Activated naive CD4-positive, alpha-beta T cell treated with anti-CD3 and anti-CD28 coated beads, Interleukin-2, amount 10 ng/mL, durations not matched to agents 7 days and 5 days (primary cell): ENCODE measurements at regions of chr10 and their contacts with region 1.

Region 1: DNA sequence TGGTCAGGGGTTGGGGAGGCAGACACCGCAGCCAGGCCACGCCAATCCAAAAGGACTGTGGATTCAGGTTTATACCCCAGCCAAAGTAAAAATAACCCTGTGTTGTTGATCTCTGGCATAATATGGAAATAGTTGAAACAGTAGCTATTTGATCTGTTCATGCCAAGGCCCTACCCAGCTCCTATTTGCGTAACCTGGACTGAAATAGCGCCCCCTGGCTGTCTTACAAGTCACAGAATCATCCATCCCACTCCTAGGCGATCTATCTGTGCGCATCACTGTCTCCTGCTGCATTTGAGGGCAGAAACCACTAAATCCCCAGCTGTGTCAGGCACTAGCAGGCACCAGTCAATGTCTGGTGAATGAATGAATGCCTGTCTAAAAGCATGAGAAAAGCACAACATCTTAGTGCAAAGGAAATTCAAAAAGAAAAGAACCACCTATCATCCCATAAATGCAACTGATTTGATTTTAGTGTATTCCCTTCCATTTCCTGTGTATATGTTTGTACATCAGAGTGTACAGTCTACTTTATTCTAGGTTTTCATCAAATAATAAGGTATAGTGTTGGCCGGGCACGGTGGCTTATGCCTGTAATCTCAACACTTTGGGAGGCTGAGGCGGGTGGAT is 160.0 kb downstream of the SLIT1 start:
- DNase-seq: peak; percentile 68
- H3K4me3 Mint-ChIP-seq: no peak overlapping the region
- H3K27ac Mint-ChIP-seq: no peak overlapping the region
- H3K4me1 Mint-ChIP-seq: no peaks in the 10 kb centered on the region
- H3K27me3 Mint-ChIP-seq: no peaks in the 10 kb centered on the region

Region 2: GRCh38 chr10:96642973-96643372 is 382.8 kb before region 1 on chr10:
- CTCF ChIA-PET with region 1: interaction called, 28 read pairs
- DNase-seq: peak; percentile 77
- H3K4me3 Mint-ChIP-seq: no peak overlapping the region
- H3K27ac Mint-ChIP-seq: no peak overlapping the region
- H3K4me1 Mint-ChIP-seq: peaks cover 9% of the 10 kb centered on the region
- H3K27me3 Mint-ChIP-seq: peaks cover 26% of the 10 kb centered on the region

Region 3: GRCh38 chr10:96910488-96911395 is 115.0 kb before region 1 on chr10:
- CTCF ChIA-PET with region 1: interaction called, 33 read pairs
- DNase-seq: no peak
- H3K4me3 Mint-ChIP-seq: no peak overlapping the region
- H3K27ac Mint-ChIP-seq: no peak overlapping the region
- H3K4me1 Mint-ChIP-seq: peaks cover 7% of the 10 kb centered on the region
- H3K27me3 Mint-ChIP-seq: no peaks in the 10 kb centered on the region

Region 4: GRCh38 chr10:96984541-96985131 is 41.1 kb before region 1 on chr10:
- CTCF ChIA-PET with region 1: interaction called, 11 read pairs
- DNase-seq: no peak
- H3K4me3 Mint-ChIP-seq: no peak overlapping the region
- H3K27ac Mint-ChIP-seq: no peak overlapping the region
- H3K4me1 Mint-ChIP-seq: no peaks in the 10 kb centered on the region
- H3K27me3 Mint-ChIP-seq: no peaks in the 10 kb centered on the region

Region 5: DNA sequence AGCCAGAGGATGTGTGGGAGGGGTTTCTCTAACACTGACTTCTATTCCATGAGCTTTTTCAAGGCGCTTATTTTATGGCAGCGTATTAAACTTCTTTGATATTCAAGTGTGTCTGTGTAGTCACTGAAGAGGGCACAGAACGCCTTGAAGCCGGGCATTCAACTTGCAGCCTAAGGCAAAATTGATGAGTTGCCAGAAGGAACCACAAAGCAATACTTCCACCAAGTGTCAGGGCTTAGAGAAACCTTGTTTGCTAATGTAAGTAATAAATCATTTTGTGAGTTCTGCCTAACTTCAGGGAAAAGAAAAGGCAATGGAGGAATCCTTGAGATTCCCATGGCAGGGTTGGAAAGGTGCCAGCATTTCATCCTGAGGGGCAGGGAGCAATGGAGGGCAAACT is 29.9 kb before region 1 on chr10:
- CTCF ChIA-PET with region 1: interaction called, 11 read pairs
- DNase-seq: no peak
- H3K4me3 Mint-ChIP-seq: no peak overlapping the region
- H3K27ac Mint-ChIP-seq: no peak overlapping the region
- H3K4me1 Mint-ChIP-seq: no peaks in the 10 kb centered on the region
- H3K27me3 Mint-ChIP-seq: no peaks in the 10 kb centered on the region

Region 6: GRCh38 chr10:97037365-97038361 is 11.9 kb after region 1 on chr10:
- CTCF ChIA-PET with region 1: interaction called, 55 read pairs
- DNase-seq: peak; percentile 80
- H3K4me3 Mint-ChIP-seq: peak overlapping the region; percentile 43
- H3K27ac Mint-ChIP-seq: no peak overlapping the region
- H3K4me1 Mint-ChIP-seq: peaks cover 11% of the 10 kb centered on the region
- H3K27me3 Mint-ChIP-seq: peaks cover 10% of the 10 kb centered on the region